AG04449 (cell line): ENCODE measurements at regions of chr11 and their contacts with region 1.

Region 1: GRCh38 chr11:114340311-114341131 is 44.3 kb downstream of the NNMT start:
- DNase-seq: no peak
- H3K4me3 ChIP-seq: no peak overlapping the region
- CTCF ChIP-seq: peak; percentile 72

Region 2: DNA sequence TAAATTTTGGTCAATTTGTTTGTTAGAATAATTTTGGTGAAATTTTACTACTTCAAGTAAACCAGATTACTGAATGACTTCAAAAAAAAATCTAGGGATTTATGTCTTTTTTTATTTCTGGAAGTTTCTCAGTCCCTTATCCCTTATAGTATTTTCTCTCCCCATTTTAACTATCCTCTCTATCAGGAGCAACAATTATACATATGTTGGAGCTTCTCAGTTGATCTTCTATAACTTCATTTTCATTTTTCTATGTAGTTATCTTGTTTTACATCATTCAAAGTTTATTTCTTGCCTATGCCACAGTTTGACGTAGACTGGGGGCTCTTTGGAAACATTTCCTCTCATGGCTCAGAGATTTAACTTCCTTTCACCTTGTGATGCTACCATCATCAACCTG is 10.1 kb before region 1 on chr11:
- CTCF ChIA-PET with region 1: interaction called, 30 read pairs
- POLR2A ChIA-PET with region 1: no interaction called
- DNase-seq: no peak
- H3K4me3 ChIP-seq: no peak overlapping the region
- CTCF ChIP-seq: no peak

Region 3: DNA sequence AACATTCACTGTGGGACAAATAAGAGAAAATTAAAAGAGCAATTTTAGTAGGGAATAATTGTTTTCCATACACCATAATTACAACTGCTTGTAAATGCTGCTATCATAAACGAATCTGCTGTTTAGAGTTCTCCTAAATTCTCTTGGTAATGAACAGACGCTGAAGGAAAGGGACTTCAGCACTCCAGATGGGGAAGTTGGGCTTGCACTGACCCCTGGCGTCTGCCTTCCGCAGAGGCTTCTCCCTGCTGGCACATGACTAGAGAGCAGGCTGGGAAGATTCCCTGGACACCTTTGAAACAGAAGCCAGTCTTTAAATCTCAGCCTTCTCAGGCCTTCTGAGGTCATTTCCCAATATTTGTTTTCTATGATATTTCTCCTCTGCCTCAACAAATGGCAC is 421.9 kb after region 1 on chr11:
- CTCF ChIA-PET with region 1: interaction called, 28 read pairs
- POLR2A ChIA-PET with region 1: no interaction called
- DNase-seq: peak; percentile 2
- H3K4me3 ChIP-seq: no peak overlapping the region
- CTCF ChIP-seq: peak; percentile 84